ENCODE measurements at regions of chr9 and their contacts with region 1.

Region 1: DNA sequence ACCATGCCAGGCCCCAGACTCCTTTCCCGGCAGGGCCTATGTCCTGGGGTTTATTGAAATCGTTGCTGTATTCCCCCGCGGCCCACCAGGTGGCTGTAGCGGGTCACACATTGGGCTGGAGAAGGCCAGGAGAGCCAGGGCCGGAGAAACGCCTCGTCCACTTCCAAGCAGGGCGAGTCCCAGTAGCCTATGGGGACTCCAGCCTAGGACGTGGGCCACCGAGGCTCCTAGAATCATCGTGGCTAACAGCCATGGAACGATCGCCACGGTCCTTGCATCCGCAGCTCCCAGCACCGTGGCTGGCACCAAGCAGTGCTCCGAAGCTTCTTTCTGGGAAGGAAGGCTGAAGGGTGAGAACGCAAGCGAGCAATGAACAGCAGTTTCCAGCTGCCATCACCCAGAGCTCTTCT is 87.7 kb downstream of the ENTREP1 start:
- DNase-seq: peak; percentile 75

Region 2: DNA sequence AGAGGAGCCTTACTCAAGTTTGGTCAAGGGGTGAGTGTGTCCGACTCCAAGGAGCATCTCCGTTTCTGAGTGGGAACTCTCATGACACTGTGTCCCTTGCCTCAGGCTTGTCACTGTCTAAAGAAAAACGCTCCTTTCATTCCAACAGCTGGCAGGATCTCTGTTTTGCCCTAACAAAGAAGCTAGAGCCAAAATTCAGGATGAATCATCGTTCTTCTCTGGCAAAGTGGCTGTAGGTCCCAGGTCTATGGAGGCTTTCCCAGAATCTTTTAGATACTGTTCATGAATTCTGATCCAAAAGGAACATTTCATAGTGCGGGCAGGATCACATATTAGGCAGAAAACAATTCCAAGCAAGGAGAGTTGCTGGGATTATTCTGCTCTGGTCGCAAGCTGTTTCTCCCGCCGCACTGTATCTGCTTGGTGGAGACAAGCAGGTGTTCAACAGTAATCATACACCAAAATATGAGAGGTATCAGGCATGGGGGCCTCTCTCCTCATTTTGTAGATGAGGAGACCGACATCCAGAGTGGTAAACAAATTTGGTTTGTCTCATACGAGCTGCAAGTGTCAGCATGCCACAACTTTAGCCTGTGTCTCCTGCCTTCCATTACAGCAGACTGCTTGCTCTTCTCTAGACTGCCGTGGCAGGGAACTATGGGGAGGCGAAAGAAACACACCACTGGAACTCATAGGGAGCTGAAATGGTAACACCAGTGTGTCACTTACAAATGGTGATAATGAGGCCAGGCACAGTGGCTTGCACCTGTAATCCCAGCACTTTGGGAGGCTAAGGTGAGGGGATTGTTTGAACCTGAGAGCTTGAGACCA is 15.1 kb before region 1 on chr9:
- CTCF ChIA-PET with region 1: no interaction called
- POLR2A ChIA-PET with region 1: no interaction called
- DNase-seq: no peak

Region 3: DNA sequence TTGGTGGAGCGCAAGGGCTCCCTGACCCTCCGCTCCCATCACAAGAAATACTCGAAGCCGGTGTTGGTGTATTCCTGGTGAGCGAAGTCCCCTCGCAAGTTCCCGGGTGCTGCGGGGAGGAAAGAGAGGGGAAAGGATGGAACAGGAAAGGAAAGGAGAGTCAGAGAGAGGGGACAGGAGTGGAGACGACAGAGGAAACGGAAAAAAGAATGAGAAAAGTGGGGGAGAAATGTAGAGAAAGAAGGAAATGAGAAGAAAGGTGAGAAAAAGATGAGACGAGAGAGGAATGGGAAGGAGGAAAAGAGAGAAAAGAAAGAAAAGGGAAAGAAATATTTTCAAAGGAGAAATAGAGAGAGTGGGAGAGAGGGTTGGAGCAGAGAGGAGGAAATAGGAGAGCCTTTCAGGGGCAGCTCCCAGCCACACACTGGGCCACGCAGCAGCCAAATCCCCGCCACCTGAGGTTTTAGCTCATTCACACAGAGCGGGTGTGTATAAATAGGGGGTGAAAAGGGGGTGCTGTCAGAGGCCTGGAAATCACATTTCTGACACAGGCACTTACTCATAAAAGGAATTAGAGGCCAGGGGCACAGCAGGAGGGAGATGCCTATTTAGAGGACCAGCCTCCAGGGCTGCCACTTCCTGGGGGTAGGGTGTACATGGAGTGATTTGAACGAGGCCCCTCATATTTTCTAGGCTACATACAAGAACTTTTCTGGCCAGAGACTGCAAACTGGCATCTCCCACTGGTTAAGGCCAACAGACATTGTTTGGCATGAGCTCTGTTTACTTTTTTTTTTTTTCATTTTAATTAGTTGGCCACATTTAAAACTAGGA is 408.4 kb after region 1 on chr9:
- CTCF ChIA-PET with region 1: interaction called, 10 read pairs
- POLR2A ChIA-PET with region 1: no interaction called
- DNase-seq: no peak